Heart right ventricle (tissue), 16 donors: ENCODE measurements at regions of chr2 and their contacts with region 1.

Region 1: DNA sequence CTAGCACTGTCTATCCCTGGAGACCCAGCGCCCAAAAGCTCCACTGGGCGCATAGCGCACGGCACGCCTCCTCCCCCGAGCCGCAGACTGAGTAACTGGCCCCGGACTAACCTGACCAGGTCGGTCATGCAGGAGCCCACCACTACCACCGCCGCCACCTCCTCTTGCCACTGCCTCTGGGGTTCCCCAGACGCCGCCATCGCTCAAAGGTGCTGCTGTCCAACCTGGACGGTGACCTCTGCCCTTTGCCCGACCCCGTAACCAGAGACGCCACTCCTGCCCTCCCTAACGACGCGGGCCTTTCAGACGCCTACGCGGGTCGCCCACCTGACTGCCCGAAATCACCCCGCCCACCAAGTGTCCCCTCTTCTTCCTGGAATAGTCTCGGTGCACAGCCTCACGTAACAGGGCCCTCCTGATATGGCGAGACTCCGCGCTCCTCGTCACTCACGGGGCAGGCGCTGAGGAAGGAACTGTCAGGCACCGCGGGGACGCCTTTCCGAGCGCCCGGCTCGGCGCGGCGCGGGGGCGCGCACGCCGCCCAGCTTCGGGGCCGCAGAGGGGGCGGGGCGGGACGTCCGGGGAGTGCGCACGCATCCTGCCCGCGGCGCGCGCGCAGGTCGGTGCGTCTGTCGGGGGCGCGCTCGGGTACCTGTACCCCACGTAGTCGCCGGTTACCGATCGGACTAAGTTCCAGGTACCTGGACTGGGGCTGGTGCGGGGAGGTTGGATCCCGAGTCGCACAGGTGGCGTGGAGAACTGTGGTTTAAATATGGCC is at the starts of genes BABAM2 and RBKS:
- DNase-seq: peak; percentile 89 to 90
- ATAC-seq: peak; percentile 93 to 98 (median 96)
- H3K4me3 ChIP-seq: peak within 1 kb of the TSS; percentile 55 to 84 (median 80)
- H3K27ac ChIP-seq: peak within 1 kb of the TSS; percentile 80 to 99 (median 98)
- H3K4me1 ChIP-seq: peaks cover 0 to 61% (median 34%) of the 10 kb centered on the region in 9 donors
- H3K27me3 ChIP-seq: no peaks in the 10 kb centered on the region
- CTCF ChIP-seq: no peak
- total RNA-seq, gene BABAM2: 54.9 to 83.4 (median 69.3) TPM
- total RNA-seq, gene RBKS: 3.4 to 9.1 (median 5.5) TPM

Region 2: GRCh38 chr2:27735263-27735953 is 154.9 kb before region 1 on chr2:
- intact Hi-C with region 1: loop called in 2 of 10 experiments (anchors 10 kb)
- DNase-seq: peak; percentile 84 to 88
- ATAC-seq: peak; percentile 93 to 96 (median 96)
- H3K4me3 ChIP-seq: peak overlapping the region; percentile 12 to 60 (median 56)
- H3K27ac ChIP-seq: peak overlapping the region; percentile 76 to 94 (median 88)
- H3K4me1 ChIP-seq: peaks cover 12 to 55% (median 50%) of the 10 kb centered on the region in 9 donors
- H3K27me3 ChIP-seq: no peaks in the 10 kb centered on the region
- CTCF ChIP-seq: no peak

Region 3: GRCh38 chr2:27921880-27922547 is 31.7 kb after region 1 on chr2:
- intact Hi-C with region 1: loop called in 1 of 10 experiments (anchors 2 kb)
- DNase-seq: no peak
- ATAC-seq: no peak
- H3K4me3 ChIP-seq: no peak overlapping the region
- H3K27ac ChIP-seq: peak overlapping the region in 4 of 10 donors; percentile 73 to 88 (median 80)
- H3K4me1 ChIP-seq: peaks cover 0 to 33% (median 17%) of the 10 kb centered on the region in 9 donors
- H3K27me3 ChIP-seq: no peaks in the 10 kb centered on the region
- CTCF ChIP-seq: no peak

Region 4: DNA sequence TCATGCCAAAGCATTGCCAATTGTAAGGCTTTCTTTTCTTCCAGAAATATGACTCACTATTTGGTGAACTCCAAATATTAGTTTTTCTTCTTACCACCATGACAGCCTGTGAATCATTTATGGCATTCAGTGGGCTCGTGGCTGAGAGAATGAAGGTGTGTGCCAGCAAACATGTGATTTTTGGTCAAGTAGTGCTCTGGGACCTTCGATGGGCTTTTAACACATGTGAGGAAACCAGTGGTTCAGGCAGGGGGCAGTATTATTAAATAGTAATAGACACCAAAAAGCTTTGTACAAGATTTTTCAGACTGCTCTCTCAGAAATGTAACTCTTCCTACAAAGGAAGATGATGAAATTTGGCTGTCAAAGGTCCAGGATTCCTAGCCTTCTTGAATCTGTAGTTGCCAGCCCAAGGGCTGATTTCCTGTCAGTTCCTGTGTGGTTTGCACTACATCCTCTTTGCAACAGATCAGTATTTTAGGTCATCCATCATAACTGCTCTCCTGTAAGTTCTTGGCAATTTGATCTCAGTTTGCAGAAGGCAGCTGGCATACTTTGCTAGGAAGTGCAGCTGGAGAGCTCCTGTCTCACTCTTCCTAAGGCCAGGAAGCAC is 64.5 kb after region 1 on chr2:
- intact Hi-C with region 1: loop called in 2 of 10 experiments (anchors 5 kb)
- DNase-seq: peak in 1 of 2 donors; percentile 51
- ATAC-seq: peak; percentile 77 to 93 (median 80)
- H3K4me3 ChIP-seq: no peak overlapping the region
- H3K27ac ChIP-seq: peak overlapping the region; percentile 10 to 85 (median 66)
- H3K4me1 ChIP-seq: peaks cover 3 to 87% (median 51%) of the 10 kb centered on the region in 9 donors
- H3K27me3 ChIP-seq: no peaks in the 10 kb centered on the region
- CTCF ChIP-seq: peak in 7 of 9 donors; percentile 22 to 62 (median 46)

Region 5: DNA sequence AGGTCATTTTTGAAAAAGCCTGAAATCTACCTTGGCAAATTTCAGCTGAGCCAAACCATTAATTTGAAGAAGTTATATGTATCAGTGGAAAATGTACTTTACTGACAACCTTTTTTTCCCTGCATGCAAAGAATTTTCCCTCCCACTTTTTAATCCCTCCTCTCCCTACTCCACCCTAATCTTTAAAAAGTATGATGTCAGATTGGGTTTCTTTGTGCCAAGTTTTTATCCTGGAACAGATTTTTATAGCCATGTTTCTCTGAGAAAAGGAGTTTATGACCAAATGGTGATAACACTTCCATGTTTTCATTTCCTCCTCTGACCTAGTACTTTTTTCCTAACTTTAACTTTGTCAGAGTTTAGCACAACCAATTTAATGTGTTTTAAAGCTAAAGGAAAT is 252.1 kb after region 1 on chr2:
- intact Hi-C with region 1: no loop called
- DNase-seq: no peak
- ATAC-seq: peak in 6 of 8 donors; percentile 21 to 55 (median 42)
- H3K4me3 ChIP-seq: no peak overlapping the region
- H3K27ac ChIP-seq: peak overlapping the region in 3 of 10 donors; percentile 9 to 28 (median 25)
- H3K4me1 ChIP-seq: peaks cover 0 to 16% (median 4%) of the 10 kb centered on the region in 9 donors
- H3K27me3 ChIP-seq: no peaks in the 10 kb centered on the region
- CTCF ChIP-seq: no peak